ENCODE measurements at regions of chr20 and their contacts with region 1.

Region 1: GRCh38 chr20:40746251-40746650 is 57.2 kb upstream of the MAFB start:
- DNase-seq: no peak
- ATAC-seq: no peak
- H3K4me3 ChIP-seq: no peak overlapping the region
- H3K27ac ChIP-seq: no peak overlapping the region
- H3K4me1 ChIP-seq: no peaks in the 10 kb centered on the region
- H3K27me3 ChIP-seq: peaks cover 58% of the 10 kb centered on the region
- CTCF ChIP-seq: no peak

Region 2: DNA sequence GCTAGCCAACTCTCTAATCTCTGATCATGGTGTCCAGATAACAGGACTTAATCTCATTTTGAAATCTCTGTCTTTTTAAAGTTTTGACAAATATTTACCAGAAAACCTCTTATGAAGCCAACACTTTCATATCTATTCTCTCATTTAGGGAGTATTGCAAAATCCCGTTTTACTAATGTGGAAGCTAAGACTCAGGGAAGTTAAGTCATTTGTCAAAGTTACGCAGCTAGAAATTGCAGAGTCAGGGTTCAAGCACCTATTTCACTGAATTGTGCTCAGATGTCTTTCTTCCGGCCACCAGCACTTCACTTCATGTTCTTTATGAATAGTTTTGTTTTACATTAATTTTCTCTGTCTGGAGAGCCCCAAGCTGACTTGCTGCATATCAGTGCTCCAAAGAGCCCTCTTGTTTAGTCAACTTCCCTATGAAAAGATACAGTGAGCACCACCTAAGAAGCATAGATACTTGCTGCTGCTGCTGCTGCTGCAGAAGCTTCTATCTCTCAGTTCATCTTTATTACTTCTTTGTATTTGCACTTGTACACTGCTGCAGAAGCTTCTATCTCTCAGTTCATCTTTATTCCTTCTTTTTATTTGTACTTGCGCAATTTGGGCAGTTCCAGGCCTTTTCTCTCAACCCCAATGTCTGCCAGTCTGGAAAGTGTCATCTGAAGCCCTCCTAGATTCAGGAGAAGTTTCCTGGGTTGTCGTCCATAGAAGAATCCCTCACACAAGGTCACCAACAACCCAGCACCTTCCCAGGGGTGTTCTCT is 386.9 kb before region 1 on chr20:
- CTCF ChIA-PET with region 1: no interaction called
- POLR2A ChIA-PET with region 1: no interaction called
- intact Hi-C with region 1: no loop called
- DNase-seq: no peak
- ATAC-seq: no peak
- H3K4me3 ChIP-seq: no peak overlapping the region
- H3K27ac ChIP-seq: no peak overlapping the region
- H3K4me1 ChIP-seq: no peaks in the 10 kb centered on the region
- H3K27me3 ChIP-seq: no peaks in the 10 kb centered on the region
- CTCF ChIP-seq: no peak

Region 3: DNA sequence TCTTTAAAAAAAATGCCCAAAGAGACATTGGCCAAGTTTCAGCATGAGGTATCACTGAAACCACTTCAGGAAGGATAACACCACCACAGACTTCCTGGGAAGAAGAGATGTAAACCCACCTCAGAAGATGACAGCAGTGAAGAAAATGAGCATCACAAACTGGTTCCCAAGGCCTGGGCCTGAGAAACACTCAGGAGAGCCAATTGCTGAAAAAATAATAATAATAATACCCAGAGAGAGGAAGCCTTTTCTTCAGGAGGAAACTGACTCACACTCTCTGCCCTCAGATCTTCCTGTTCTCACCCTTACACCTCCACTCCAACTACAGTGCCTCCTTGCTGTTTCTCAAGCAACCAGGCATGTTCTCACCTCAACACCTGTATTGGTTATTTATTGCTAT is 10.8 kb after region 1 on chr20:
- CTCF ChIA-PET with region 1: no interaction called
- POLR2A ChIA-PET with region 1: no interaction called
- intact Hi-C with region 1: no loop called
- DNase-seq: no peak
- ATAC-seq: no peak
- H3K4me3 ChIP-seq: no peak overlapping the region
- H3K27ac ChIP-seq: no peak overlapping the region
- H3K4me1 ChIP-seq: no peaks in the 10 kb centered on the region
- H3K27me3 ChIP-seq: no peaks in the 10 kb centered on the region
- CTCF ChIP-seq: no peak

Region 4: GRCh38 chr20:40953856-40954255 is 207.6 kb after region 1 on chr20:
- CTCF ChIA-PET with region 1: interaction called, 11 read pairs
- POLR2A ChIA-PET with region 1: no interaction called
- intact Hi-C with region 1: no loop called
- DNase-seq: no peak
- ATAC-seq: no peak
- H3K4me3 ChIP-seq: no peak overlapping the region
- H3K27ac ChIP-seq: no peak overlapping the region
- H3K4me1 ChIP-seq: peaks cover 6% of the 10 kb centered on the region
- H3K27me3 ChIP-seq: no peaks in the 10 kb centered on the region
- CTCF ChIP-seq: no peak